Mammary epithelial cell (primary cell): ENCODE measurements at regions of chr22 and their contacts with region 1.

Region 1: GRCh38 chr22:19122143-19122751 is at the start of gene DGCR2:
- DNase-seq: peak; percentile 93
- H3K4me3 ChIP-seq: peak within 1 kb of the TSS; percentile 96 to 99 (median 96)
- H3K27ac ChIP-seq: peak within 1 kb of the TSS; percentile 85
- H3K4me1 ChIP-seq: peaks cover 17% of the 10 kb centered on the region
- H3K27me3 ChIP-seq: no peaks in the 10 kb centered on the region
- CTCF ChIP-seq: no peak
- total RNA-seq, gene DGCR2: 66.1 to 80.9 TPM

Region 2: DNA sequence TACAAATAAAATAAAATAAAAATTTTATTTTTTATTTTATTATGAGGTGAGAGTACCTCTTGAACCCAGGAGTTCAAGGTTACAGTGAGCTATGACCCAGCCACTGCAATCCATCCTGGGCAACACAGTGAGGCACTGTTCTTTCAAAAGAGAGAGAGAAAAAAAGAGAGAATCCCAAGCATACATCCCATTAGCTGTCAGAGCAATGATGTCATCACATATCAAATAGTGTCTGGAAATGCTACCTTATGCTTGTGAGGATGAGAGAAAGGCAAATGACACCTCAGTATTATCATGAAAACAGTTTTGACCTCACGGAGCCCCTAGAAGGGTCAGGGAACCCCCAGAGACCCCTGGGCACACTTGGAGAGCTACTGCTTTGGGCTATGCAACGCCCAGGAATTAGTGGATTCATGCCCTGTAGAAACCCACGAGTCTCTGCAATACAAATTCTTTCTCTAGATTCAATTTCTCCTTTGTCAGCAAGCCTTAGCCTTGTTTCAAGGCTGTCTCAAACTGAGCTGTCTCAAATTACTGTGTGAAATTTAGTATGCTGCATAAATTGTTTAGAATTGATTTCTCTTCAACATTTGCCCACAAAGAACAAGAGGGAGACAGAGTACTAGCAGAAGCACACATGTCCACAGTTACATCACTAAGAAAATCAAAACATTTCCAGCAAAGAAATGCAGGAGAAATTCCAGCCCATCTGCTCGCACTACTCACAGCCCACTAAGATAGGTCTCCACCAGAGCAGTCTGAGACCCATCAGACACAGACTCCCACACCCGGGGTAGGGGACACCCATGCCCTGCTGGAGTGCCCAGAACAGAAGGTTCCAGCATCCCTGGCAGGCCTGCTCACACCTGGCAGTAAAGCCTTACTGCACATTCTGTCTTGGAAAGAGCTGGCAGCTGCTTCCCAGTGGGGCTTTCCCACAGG is 18.1 kb before region 1 on chr22:
- CTCF ChIA-PET with region 1: no interaction called
- dilution Hi-C with region 1: no loop called
- in situ Hi-C with region 1: no loop called
- intact Hi-C with region 1: loop called (anchors 1 kb)
- DNase-seq: no peak
- H3K4me3 ChIP-seq: no peak overlapping the region
- H3K27ac ChIP-seq: no peak overlapping the region
- H3K4me1 ChIP-seq: peaks cover 12% of the 10 kb centered on the region
- H3K27me3 ChIP-seq: no peaks in the 10 kb centered on the region
- CTCF ChIP-seq: peak in 1 of 2 donors; percentile 8

Region 3: DNA sequence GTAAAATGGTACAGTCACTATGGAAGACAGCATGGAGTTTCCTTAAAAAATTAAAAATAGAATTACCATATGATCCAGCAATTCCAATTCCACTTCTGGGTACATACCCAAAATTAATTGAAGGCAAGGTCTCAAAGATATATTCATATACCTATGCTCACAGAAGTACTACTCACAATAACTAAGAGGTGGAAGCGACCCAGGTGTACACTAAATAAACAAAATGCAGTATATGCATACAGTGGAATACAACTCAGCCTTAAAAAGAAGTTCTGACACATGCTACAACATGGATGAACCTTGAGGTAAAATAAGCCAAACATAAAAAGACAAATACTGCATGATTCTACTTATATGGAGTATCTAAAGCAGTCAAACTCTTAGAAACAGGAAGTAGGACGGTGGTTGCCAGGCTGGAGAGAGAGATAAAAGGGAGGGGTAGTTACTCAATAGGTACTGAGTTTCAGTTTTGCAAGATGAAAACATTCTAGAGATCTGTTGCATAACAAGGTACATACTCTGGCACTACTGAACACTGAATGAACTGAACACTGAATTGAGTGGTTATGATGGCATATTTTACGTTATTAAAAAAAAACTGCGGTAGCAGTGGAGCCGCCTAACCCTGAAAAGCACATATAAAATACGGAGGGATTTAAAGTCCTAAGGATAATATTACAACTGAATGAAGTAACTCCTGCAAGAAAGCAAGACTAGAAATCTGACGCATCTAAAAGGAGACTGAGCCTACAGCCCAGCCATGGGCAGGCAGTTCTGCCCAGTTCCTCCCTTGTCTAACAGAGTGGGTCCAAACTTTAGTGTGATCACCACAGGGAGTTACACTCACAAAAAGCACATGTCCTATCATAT is 12.8 kb before region 1 on chr22:
- CTCF ChIA-PET with region 1: no interaction called
- dilution Hi-C with region 1: no loop called
- in situ Hi-C with region 1: no loop called
- intact Hi-C with region 1: loop called (anchors 2 kb)
- DNase-seq: peak; percentile 88
- H3K4me3 ChIP-seq: peak overlapping the region in 1 of 3 experiments; percentile 4
- H3K27ac ChIP-seq: peak overlapping the region; percentile 88
- H3K4me1 ChIP-seq: peaks cover 20% of the 10 kb centered on the region
- H3K27me3 ChIP-seq: no peaks in the 10 kb centered on the region
- CTCF ChIP-seq: no peak

Region 4: GRCh38 chr22:19174106-19175025 is 52.1 kb after region 1 on chr22:
- CTCF ChIA-PET with region 1: no interaction called
- dilution Hi-C with region 1: no loop called
- in situ Hi-C with region 1: no loop called
- intact Hi-C with region 1: no loop called
- DNase-seq: peak; percentile 55
- H3K4me3 ChIP-seq: no peak overlapping the region
- H3K27ac ChIP-seq: no peak overlapping the region
- H3K4me1 ChIP-seq: peaks cover 62% of the 10 kb centered on the region
- H3K27me3 ChIP-seq: peaks cover 2% of the 10 kb centered on the region
- CTCF ChIP-seq: no peak